Endothelial cell of umbilical vein (primary cell): ENCODE measurements at regions of chr6 and their contacts with region 1.

Region 1: DNA sequence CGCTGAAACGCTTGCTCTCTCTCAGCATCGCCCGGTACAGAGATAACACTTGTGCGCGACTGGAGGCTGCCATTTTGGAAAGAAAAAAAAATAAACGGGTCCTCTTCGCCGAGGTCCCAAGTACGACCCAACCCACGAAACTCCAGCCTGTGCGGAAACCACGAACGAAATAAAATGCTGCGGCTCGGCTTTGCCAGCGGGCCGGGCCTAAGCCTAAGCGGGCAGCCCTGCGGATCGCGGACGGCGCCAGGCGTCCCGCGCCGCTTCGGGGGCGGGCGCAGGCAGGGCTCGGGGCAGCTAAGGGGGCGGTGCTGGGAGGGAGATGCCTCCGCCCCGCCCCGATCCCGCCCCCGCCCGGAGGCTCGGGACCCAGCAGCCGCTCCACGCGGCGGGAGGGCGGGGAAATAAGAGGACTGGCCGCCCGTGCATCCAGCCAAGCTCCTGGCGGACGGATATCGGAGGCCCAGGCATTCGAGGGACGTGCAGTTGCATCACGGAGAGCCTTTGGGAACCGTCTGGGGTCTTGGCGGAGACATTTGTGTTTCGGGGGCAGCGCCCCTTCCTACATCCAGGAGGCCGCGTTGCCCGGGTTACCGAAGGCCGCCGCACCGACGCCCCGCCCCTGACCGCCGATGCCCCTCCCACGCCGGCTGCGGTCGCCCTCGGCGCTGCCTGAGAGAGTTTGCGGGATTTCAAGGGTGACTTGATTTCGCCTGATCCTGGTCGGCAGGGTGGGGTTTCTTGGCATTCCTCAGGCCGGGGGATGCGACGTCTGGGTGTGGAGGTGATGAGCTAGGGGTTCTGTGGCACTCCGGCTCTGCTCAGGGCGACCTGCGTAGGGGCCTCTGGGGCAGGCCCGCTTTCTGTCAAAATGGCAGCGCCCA is at the starts of genes FARS2 and LYRM4:
- DNase-seq: peak; percentile 94
- H3K4me3 ChIP-seq: peak within 1 kb of the TSS; percentile 94 to 98 (median 96)
- H3K27ac ChIP-seq: peak within 1 kb of the TSS; percentile 89
- H3K4me1 ChIP-seq: peaks cover 9% of the 10 kb centered on the region
- H3K27me3 ChIP-seq: no peaks in the 10 kb centered on the region
- CTCF ChIP-seq: peak in 1 of 2 donors; percentile 27
- POLR2A ChIP-seq: peak; percentile 32
- total RNA-seq, gene FARS2: 19.6 and 20.5 TPM in 2 replicates
- total RNA-seq, gene LYRM4: 39.5 and 39.7 TPM in 2 replicates

Region 2: DNA sequence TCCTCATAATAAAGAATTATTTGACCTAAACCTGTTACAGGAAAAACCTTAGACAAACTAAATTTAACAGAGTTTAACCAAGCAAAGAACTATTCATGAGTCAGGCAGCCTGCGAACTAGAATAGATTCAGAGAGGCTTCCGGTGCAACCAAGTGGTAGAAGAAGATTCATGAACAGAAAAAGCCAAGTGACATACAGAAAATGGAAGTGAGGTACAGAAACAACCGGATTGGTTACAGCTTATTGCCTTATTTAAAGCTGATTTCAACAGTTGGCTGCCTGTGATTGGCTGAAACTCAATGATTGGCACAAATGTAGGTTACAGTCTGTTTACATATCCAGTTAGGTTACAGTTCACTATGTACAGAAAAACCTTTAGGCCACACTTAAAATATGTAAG is 165.7 kb before region 1 on chr6:
- CTCF ChIA-PET with region 1: no interaction called
- POLR2A ChIA-PET with region 1: no interaction called
- dilution Hi-C with region 1: no loop called
- intact Hi-C with region 1: no loop called
- DNase-seq: no peak
- H3K4me3 ChIP-seq: no peak overlapping the region
- H3K27ac ChIP-seq: no peak overlapping the region
- H3K4me1 ChIP-seq: no peaks in the 10 kb centered on the region
- H3K27me3 ChIP-seq: peaks cover 7 to 9% of the 10 kb centered on the region in 2 experiments
- CTCF ChIP-seq: no peak
- POLR2A ChIP-seq: no peak

Region 3: GRCh38 chr6:5205877-5206850 is 54.7 kb before region 1 on chr6:
- CTCF ChIA-PET with region 1: no interaction called
- POLR2A ChIA-PET with region 1: no interaction called
- dilution Hi-C with region 1: no loop called
- intact Hi-C with region 1: loop called (anchors 2 kb)
- DNase-seq: peak; percentile 74
- H3K4me3 ChIP-seq: no peak overlapping the region
- H3K27ac ChIP-seq: peak overlapping the region; percentile 32
- H3K4me1 ChIP-seq: peaks cover 27% of the 10 kb centered on the region
- H3K27me3 ChIP-seq: no peaks in the 10 kb centered on the region
- CTCF ChIP-seq: no peak
- POLR2A ChIP-seq: no peak

Region 4: DNA sequence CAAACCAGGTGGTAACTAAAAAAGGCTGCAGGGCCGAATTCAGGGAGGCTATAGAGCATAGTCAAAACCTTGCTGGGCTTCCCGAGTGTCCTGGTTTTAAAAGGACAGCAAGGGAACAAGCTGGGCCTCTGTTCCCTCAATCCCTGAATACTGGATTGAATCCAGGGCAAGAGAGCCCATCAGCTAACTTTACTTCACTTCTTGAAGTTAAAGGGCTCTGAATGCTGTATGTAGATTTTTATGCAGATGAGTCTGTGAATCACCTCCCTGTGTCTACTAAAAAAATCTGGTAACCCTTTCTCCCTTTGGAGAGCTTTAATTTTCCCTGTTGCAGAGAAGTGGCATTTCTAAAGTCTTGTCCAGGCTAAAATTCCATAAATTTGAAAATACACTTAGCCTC is 29.6 kb before region 1 on chr6:
- CTCF ChIA-PET with region 1: interaction called, 3 read pairs
- POLR2A ChIA-PET with region 1: no interaction called
- dilution Hi-C with region 1: no loop called
- intact Hi-C with region 1: loop called (anchors 2 kb)
- DNase-seq: no peak
- H3K4me3 ChIP-seq: no peak overlapping the region
- H3K27ac ChIP-seq: peak overlapping the region; percentile 47
- H3K4me1 ChIP-seq: peaks cover 17% of the 10 kb centered on the region
- H3K27me3 ChIP-seq: no peaks in the 10 kb centered on the region
- CTCF ChIP-seq: no peak
- POLR2A ChIP-seq: no peak

Region 5: GRCh38 chr6:5379647-5380242 is 118.8 kb after region 1 on chr6:
- CTCF ChIA-PET with region 1: interaction called, 8 read pairs
- POLR2A ChIA-PET with region 1: no interaction called
- dilution Hi-C with region 1: no loop called
- intact Hi-C with region 1: loop called (anchors 1 kb)
- DNase-seq: peak; percentile 71
- H3K4me3 ChIP-seq: no peak overlapping the region
- H3K27ac ChIP-seq: no peak overlapping the region
- H3K4me1 ChIP-seq: no peaks in the 10 kb centered on the region
- H3K27me3 ChIP-seq: no peaks in the 10 kb centered on the region
- CTCF ChIP-seq: peak; percentile 68 to 77
- POLR2A ChIP-seq: no peak

Region 6: GRCh38 chr6:7261032-7261841 is 2000.3 kb after region 1 on chr6:
- CTCF ChIA-PET with region 1: no interaction called
- POLR2A ChIA-PET with region 1: no interaction called
- dilution Hi-C with region 1: no loop called
- intact Hi-C with region 1: no loop called
- DNase-seq: peak; percentile 86
- H3K4me3 ChIP-seq: peak overlapping the region; percentile 8 to 51 (median 33)
- H3K27ac ChIP-seq: no peak overlapping the region
- H3K4me1 ChIP-seq: peaks cover 7% of the 10 kb centered on the region
- H3K27me3 ChIP-seq: no peaks in the 10 kb centered on the region
- CTCF ChIP-seq: no peak
- POLR2A ChIP-seq: peak; percentile 86